Gastrocnemius medialis (tissue), 4 donors: ENCODE measurements at regions of chr5 and their contacts with region 1.

Region 1: DNA sequence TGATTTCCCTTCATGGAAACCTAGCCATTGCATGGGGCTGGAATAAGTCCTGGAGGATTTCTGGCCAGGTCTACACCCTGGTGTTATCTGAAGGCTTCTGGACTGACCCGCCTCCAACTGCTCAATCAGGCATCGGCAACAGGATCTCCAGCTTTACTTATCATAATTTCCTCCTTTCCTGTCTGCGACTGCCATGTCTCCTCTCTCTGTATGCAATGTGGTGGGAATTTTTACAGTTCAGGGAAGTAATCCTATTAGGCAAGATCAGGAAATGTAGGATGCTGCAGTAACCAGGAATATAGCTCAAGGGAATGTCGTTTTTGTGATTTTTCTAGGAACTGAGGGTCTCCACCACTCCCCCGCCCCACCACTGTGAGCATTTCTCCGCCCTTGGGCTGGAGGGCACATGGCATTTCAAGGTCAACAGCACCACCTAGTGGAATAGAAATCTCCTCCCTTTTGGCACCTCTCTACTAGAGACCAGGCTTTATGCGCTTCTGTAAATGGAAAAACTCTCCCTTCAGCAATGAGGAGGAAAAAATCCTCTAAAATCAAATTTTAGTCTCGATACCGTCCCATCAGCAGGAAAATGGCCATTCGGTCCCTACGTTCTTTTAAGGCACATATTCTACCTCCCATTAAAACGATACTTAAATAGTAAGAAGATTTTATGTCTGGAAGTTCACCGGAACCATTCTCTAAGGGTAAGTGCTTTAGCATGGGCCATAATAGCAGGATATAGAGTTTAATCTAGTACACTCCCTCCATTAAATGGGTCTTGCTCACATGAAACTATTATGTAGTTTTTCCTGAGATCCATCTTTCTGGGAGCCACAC is 93.0 kb downstream of the YTHDC2 start:
- DNase-seq: peak in 1 of 2 donors; percentile 6
- ATAC-seq: peak; percentile 62 to 68
- H3K4me3 ChIP-seq: no peak overlapping the region
- H3K27ac ChIP-seq: no peak overlapping the region
- H3K4me1 ChIP-seq: no peaks in the 10 kb centered on the region
- H3K27me3 ChIP-seq: peaks cover 0 to 6% (median 0%) of the 10 kb centered on the region in 3 donors
- CTCF ChIP-seq: peak; percentile 24 to 71 (median 58)
- POLR2A ChIP-seq: no peak

Region 2: GRCh38 chr5:113005454-113005853 is 601.1 kb before region 1 on chr5:
- in situ Hi-C with region 1: loop called in 2 of 4 experiments (anchors 10 to 25 kb)
- intact Hi-C with region 1: no loop called
- DNase-seq: no peak
- ATAC-seq: no peak
- H3K4me3 ChIP-seq: no peak overlapping the region
- H3K27ac ChIP-seq: no peak overlapping the region
- H3K4me1 ChIP-seq: no peaks in the 10 kb centered on the region
- H3K27me3 ChIP-seq: no peaks in the 10 kb centered on the region
- CTCF ChIP-seq: no peak
- POLR2A ChIP-seq: no peak

Region 3: DNA sequence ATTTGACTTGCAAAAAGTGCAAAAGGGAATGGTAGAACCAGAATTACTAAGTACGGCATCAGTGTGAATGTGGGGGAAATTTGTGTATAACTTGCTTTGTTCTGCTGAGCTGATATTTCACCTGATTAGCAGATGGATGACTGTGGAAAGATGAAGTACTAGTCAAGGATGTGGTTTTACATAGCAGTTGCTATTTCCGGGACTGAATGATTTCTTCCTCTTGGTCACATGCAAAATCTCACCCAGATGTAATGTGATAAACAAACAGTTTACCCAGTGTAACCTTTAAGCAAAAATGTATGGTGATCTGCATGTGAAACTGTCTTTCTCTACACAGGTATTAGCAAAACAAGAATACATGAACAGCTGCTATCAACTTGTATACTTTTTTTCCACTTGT is 583.9 kb before region 1 on chr5:
- in situ Hi-C with region 1: loop called in 1 of 4 experiments (anchors 25 kb)
- intact Hi-C with region 1: no loop called
- DNase-seq: no peak
- ATAC-seq: no peak
- H3K4me3 ChIP-seq: no peak overlapping the region
- H3K27ac ChIP-seq: no peak overlapping the region
- H3K4me1 ChIP-seq: no peaks in the 10 kb centered on the region
- H3K27me3 ChIP-seq: no peaks in the 10 kb centered on the region
- CTCF ChIP-seq: no peak
- POLR2A ChIP-seq: no peak

Region 4: GRCh38 chr5:113371721-113372196 is 234.8 kb before region 1 on chr5:
- in situ Hi-C with region 1: loop called in 1 of 4 experiments (anchors 25 kb)
- intact Hi-C with region 1: no loop called
- DNase-seq: no peak
- ATAC-seq: peak in 1 of 2 donors; percentile 19
- H3K4me3 ChIP-seq: no peak overlapping the region
- H3K27ac ChIP-seq: no peak overlapping the region
- H3K4me1 ChIP-seq: peaks cover 0 to 3% of the 10 kb centered on the region in 2 donors
- H3K27me3 ChIP-seq: no peaks in the 10 kb centered on the region
- CTCF ChIP-seq: no peak
- POLR2A ChIP-seq: no peak

Region 5: GRCh38 chr5:113378959-113379541 is 227.5 kb before region 1 on chr5:
- in situ Hi-C with region 1: loop called in 3 of 4 experiments (anchors 10 to 25 kb)
- intact Hi-C with region 1: no loop called
- DNase-seq: peak; percentile 17 to 18
- ATAC-seq: peak in 1 of 2 donors; percentile 62
- H3K4me3 ChIP-seq: no peak overlapping the region
- H3K27ac ChIP-seq: no peak overlapping the region
- H3K4me1 ChIP-seq: no peaks in the 10 kb centered on the region
- H3K27me3 ChIP-seq: no peaks in the 10 kb centered on the region
- CTCF ChIP-seq: peak in 4 of 5 experiments; percentile 44 to 68 (median 55)
- POLR2A ChIP-seq: no peak

Region 6: DNA sequence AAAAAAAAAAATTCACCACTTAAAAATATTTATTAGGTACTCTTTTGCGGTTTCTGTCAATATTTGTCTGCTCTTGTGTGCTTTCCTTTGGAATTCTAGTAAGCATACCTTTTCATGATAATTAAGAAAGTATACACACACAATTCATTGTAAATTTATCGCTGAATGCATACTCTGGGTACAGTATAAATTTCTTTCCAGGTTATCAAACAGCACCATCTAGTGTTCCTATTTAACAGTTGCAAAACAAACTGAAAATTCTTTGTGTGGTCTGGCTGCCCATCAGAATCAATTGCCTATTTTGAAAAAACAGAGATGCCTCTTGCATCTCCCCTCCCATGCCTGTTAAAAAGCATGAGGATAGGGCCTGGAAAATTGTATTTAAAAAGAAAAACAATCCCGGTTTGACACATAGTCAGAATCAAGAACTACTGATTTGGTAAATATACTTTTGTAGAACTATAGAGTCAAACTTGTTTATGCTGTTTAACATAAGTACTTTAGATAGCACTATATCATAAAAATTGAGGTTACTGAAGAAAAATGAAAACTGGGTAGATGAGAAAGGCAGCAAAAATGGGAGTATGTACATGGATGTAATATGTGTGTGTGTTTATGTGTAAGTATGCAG is 1640.0 kb after region 1 on chr5:
- in situ Hi-C with region 1: no loop called
- intact Hi-C with region 1: loop called (anchors 10 kb)
- DNase-seq: no peak
- ATAC-seq: peak in 1 of 2 donors; percentile 33
- H3K4me3 ChIP-seq: no peak overlapping the region
- H3K27ac ChIP-seq: no peak overlapping the region
- H3K4me1 ChIP-seq: peaks cover 7 to 12% of the 10 kb centered on the region in 2 donors
- H3K27me3 ChIP-seq: no peaks in the 10 kb centered on the region
- CTCF ChIP-seq: peak; percentile 26 to 77 (median 62)
- POLR2A ChIP-seq: no peak